Thyroid gland (tissue), 4 donors: ENCODE measurements at regions of chr19 and their contacts with region 1.

Region 1: DNA sequence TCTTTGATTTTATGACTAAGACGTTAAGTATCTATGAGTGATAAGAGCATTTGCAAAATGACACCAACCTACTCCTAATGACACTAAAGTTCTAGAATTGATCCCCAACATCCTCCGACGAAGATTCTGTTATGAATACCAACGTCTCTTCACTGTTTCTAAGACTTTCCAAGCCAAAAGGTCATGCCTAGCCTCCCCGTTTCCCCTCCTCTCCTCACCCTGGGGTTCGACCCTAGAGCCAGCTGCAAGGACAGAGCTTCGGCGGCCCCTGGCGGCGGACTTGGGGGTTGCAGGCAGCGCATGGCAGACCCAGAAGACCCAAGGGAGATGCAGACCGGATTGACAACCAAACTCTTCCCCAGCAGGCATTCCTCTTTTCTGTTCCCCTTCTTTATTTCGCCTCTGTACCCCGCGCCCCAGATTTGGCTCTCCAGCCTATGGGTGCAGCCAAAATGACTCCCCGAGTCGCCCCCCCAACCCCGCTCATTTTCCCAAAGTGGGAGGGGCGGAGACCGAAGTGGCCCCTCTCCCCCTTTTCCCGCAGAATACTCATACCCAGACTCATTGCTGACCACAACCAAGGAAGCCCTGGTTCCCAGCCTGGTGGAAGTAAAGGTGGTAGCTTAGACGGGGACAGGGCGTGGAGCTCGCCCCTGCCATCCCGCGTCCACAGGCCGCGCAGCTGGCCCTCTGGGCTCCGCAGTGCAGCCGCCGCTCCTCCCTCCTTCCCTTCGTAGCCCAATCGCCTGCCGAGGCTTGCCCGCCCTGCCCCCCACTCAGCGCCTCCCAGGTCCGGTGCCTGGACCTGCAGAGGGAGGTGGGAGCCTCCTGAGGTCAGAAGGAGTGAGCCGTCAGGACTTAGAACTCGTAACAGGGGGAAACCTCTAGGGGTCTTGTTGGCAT is 4.1 kb upstream of the EML2 start:
- DNase-seq: peak; percentile 80 to 81
- H3K4me3 ChIP-seq: no peak overlapping the region
- H3K27ac ChIP-seq: no peak overlapping the region
- H3K4me1 ChIP-seq: peaks cover 17 to 43% of the 10 kb centered on the region in 2 donors
- H3K27me3 ChIP-seq: peaks cover 12% of the 10 kb centered on the region
- CTCF ChIP-seq: peak; percentile 95 to 99 (median 97)
- POLR2A ChIP-seq: no peak

Region 2: DNA sequence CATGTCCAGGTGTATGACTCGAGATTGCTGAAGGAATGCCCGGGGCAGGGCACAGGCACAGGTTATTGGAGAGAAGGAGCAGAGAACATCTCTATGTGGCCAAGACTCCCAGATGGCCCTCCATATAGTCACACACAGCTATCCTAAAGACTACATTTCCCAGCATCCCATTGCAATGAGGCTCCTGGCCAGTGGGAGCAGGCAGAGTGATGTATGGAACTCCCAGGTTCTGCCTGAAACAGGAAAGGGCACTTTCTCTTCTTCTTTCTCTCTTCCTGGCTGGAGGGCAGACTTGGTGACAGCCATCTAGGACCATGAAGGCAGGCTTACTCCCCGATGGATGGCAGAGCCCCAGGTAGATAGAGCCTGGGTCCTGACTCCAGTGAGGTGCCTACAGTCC is 251.9 kb before region 1 on chr19:
- intact Hi-C with region 1: no loop called
- DNase-seq: no peak
- H3K4me3 ChIP-seq: no peak overlapping the region
- H3K27ac ChIP-seq: no peak overlapping the region
- H3K4me1 ChIP-seq: no peaks in the 10 kb centered on the region
- H3K27me3 ChIP-seq: no peaks in the 10 kb centered on the region
- CTCF ChIP-seq: no peak
- POLR2A ChIP-seq: no peak

Region 3: GRCh38 chr19:45607071-45608029 is 35.9 kb before region 1 on chr19:
- intact Hi-C with region 1: loop called (anchors 2 kb)
- DNase-seq: peak; percentile 75 to 81
- H3K4me3 ChIP-seq: no peak overlapping the region
- H3K27ac ChIP-seq: no peak overlapping the region
- H3K4me1 ChIP-seq: peaks cover under 1 to 10% of the 10 kb centered on the region in 2 donors
- H3K27me3 ChIP-seq: peaks cover 4% of the 10 kb centered on the region
- CTCF ChIP-seq: peak; percentile 57 to 90 (median 82)
- POLR2A ChIP-seq: no peak